CD4-positive, alpha-beta memory T cell (primary cell): ENCODE measurements at regions of chr3 and their contacts with region 1.

Region 1: DNA sequence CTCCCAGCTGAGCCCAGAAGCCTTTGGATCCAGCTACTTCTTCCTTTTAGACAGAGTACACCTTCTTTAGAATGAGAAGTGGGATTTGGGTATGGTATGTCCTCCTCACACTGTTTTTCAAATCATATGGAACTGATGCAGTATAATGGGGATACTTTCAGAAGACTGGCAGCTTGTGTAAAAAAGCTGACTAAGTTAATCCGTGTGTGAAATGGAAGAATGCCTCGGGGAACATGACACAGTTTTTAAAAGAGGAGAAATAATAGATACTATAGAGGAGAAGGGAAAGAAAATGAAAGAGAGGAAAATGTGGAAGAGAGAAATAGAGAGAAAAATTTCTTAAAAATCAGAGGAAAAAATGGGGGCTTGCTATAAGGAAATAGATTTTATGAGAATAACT is 47.7 kb downstream of the TUSC7 start:
- DNase-seq: no peak
- H3K4me3 ChIP-seq: no peak overlapping the region
- H3K4me3 Mint-ChIP-seq: no peak overlapping the region
- H3K27ac ChIP-seq: no peak overlapping the region
- H3K27ac Mint-ChIP-seq: no peak overlapping the region
- H3K4me1 ChIP-seq: no peaks in the 10 kb centered on the region
- H3K4me1 Mint-ChIP-seq: peaks cover 0 to 1% (median 0%) of the 10 kb centered on the region in 4 donors
- H3K27me3 ChIP-seq: no peaks in the 10 kb centered on the region
- H3K27me3 Mint-ChIP-seq: no peaks in the 10 kb centered on the region

Region 2: DNA sequence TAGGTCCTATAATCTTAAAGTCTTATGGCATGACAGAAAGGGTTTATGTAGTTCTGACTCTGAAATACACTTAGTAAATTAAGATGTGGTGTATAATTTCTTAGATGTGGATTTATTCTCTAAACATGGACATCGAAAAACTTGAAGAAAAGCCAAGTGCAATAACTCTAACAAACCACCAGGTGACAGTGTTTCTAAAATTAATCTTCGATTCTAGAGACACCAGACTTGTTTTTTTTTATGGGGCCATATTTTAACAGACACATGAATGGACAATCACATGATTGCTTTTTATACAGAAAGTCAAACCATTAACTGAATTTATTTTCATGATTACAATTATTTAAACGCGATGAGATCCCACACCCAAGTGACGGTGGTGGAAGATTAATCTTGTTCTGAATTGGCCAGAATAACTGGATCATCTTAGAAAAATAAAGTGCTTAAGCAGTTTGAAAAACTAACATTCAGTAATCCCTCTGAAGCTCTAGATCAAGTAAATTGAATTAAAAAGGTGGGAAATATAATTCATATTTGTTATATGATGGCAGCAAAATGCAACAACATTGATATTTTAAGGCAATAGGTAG is 617.1 kb before region 1 on chr3:
- CTCF ChIA-PET with region 1: no interaction called
- POLR2A ChIA-PET with region 1: no interaction called
- intact Hi-C with region 1: loop called (anchors 5 kb)
- DNase-seq: no peak
- H3K4me3 ChIP-seq: no peak overlapping the region
- H3K4me3 Mint-ChIP-seq: no peak overlapping the region
- H3K27ac ChIP-seq: no peak overlapping the region
- H3K27ac Mint-ChIP-seq: no peak overlapping the region
- H3K4me1 ChIP-seq: no peaks in the 10 kb centered on the region
- H3K4me1 Mint-ChIP-seq: no peaks in the 10 kb centered on the region
- H3K27me3 ChIP-seq: no peaks in the 10 kb centered on the region
- H3K27me3 Mint-ChIP-seq: no peaks in the 10 kb centered on the region

Region 3: DNA sequence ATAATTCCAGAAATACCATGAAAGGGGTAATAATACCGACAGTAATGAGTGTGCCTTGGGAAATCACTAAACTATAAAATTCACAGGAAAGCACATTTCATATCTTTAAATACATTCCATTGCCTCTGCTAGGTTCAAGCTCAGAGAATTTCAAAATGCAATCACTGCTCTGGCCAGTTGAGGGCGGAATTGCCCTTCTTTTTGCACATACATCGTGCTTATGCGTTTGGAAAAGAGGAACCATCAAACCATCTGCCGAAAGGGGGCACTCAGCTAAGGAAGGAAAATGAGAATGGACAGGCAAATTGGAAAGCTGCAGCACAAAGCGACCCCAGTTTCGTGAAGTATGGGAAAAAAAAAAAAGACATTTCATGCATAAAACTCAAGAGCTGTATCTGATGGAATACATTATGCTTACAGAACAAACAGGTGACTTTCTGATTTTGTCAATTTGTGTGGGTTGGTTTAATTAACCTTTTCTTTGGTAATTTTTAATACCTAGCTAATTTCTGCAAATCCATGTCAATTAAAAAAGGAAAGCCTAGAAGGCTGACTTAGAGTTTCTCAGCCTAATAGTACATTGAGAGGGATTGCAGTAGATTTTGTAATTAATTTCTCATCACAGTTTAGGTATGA is 13.6 kb after region 1 on chr3:
- CTCF ChIA-PET with region 1: interaction called, 12 read pairs
- POLR2A ChIA-PET with region 1: no interaction called
- intact Hi-C with region 1: no loop called
- DNase-seq: peak in 2 of 5 donors; percentile 1 to 6
- H3K4me3 ChIP-seq: no peak overlapping the region
- H3K4me3 Mint-ChIP-seq: no peak overlapping the region
- H3K27ac ChIP-seq: no peak overlapping the region
- H3K27ac Mint-ChIP-seq: no peak overlapping the region
- H3K4me1 ChIP-seq: no peaks in the 10 kb centered on the region
- H3K4me1 Mint-ChIP-seq: peaks cover 0 to 2% (median under 1%) of the 10 kb centered on the region in 4 donors
- H3K27me3 ChIP-seq: no peaks in the 10 kb centered on the region
- H3K27me3 Mint-ChIP-seq: peaks cover 0 to 2% of the 10 kb centered on the region in 2 donors

Region 4: DNA sequence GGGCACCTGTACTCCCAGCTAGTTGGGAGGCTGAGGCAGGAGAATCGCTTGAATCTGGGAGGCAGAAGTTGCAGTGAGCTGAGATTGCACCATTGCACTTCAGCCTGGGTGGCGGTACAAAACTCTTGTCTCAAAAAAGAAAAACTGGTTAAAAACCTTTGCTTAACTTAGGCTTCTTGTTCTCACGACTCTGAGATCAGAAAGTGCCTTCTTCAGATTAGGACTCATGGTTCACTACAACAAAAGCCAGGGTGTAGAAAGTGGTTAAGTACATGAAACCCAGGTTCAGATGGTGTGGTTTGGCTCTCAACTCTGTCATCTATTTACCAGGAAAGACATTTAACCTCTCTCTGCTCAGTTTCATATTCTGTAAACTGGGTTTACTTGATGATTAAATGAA is 120.7 kb after region 1 on chr3:
- CTCF ChIA-PET with region 1: no interaction called
- POLR2A ChIA-PET with region 1: no interaction called
- intact Hi-C with region 1: no loop called
- DNase-seq: no peak
- H3K4me3 ChIP-seq: no peak overlapping the region
- H3K4me3 Mint-ChIP-seq: no peak overlapping the region
- H3K27ac ChIP-seq: no peak overlapping the region
- H3K27ac Mint-ChIP-seq: no peak overlapping the region
- H3K4me1 ChIP-seq: no peaks in the 10 kb centered on the region
- H3K4me1 Mint-ChIP-seq: no peaks in the 10 kb centered on the region
- H3K27me3 ChIP-seq: no peaks in the 10 kb centered on the region
- H3K27me3 Mint-ChIP-seq: peaks cover 0 to 2% of the 10 kb centered on the region in 2 donors